PC-3 (cell line): ENCODE measurements at regions of chr14 and their contacts with region 1.

Region 1: DNA sequence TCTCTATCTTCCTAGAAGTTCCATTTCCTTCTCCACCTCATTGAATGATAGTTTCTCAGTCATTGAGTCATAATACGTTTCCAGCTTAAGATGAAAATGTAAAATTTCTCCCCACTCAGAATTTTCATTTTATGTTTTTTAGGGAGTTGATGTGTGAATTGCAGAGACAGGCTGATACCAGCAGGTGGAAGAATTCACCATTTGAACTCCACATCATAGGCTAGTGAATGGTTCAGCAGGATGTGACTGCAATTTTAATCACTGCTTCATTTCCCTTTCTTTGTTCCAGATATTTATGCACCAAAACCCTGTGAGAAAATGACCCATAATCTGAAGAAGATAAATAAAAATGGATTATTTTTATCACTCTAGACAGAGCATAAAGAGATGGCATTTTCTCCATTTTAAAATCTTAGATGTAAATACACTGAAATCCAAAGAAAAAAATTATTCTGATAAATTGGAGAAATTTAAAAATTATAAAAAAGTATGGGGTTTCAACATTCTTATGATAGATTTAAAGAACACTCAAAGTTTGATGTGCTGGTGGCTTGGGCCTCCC is 10.6 kb upstream of the PYGL start:
- DNase-seq: peak; percentile 82
- ATAC-seq: peak; percentile 69
- H3K4me3 ChIP-seq: peak overlapping the region; percentile 20; the same call in 1 of the 2 replicates
- H3K27ac ChIP-seq: peak overlapping the region; percentile 89
- H3K4me1 ChIP-seq: peaks cover 19% of the 10 kb centered on the region
- H3K27me3 ChIP-seq: no peaks in the 10 kb centered on the region
- CTCF ChIP-seq: peak; percentile 91

Region 2: GRCh38 chr14:50573858-50574257 is 381.0 kb before region 1 on chr14:
- CTCF ChIA-PET with region 1: no interaction called
- POLR2A ChIA-PET with region 1: no interaction called
- intact Hi-C with region 1: no loop called
- DNase-seq: peak; percentile 68
- ATAC-seq: peak; percentile 97
- H3K4me3 ChIP-seq: 0 out of 2 replicates have a peak overlapping the region, but pooled peaks have one; percentile 11
- H3K27ac ChIP-seq: no peak overlapping the region
- H3K4me1 ChIP-seq: peaks cover 11% of the 10 kb centered on the region
- H3K27me3 ChIP-seq: no peaks in the 10 kb centered on the region
- CTCF ChIP-seq: no peak

Region 3: GRCh38 chr14:50631408-50631821 is 323.5 kb before region 1 on chr14:
- CTCF ChIA-PET with region 1: no interaction called
- POLR2A ChIA-PET with region 1: no interaction called
- intact Hi-C with region 1: no loop called
- DNase-seq: no peak
- ATAC-seq: peak; percentile 64
- H3K4me3 ChIP-seq: no peak overlapping the region
- H3K27ac ChIP-seq: no peak overlapping the region
- H3K4me1 ChIP-seq: no peaks in the 10 kb centered on the region
- H3K27me3 ChIP-seq: no peaks in the 10 kb centered on the region
- CTCF ChIP-seq: no peak

Region 4: GRCh38 chr14:50943943-50944646 is 10.8 kb before region 1 on chr14 and contains the start of gene PYGL:
- CTCF ChIA-PET with region 1: interaction called, 12 read pairs
- POLR2A ChIA-PET with region 1: no interaction called
- intact Hi-C with region 1: no loop called
- DNase-seq: peak; percentile 88
- ATAC-seq: peak; percentile 76
- H3K4me3 ChIP-seq: peak within 1 kb of the TSS; percentile 97
- H3K27ac ChIP-seq: peak within 1 kb of the TSS; percentile 57
- H3K4me1 ChIP-seq: peaks cover 19% of the 10 kb centered on the region
- H3K27me3 ChIP-seq: no peaks in the 10 kb centered on the region
- CTCF ChIP-seq: no peak
- total RNA-seq, gene PYGL: 163 and 174 TPM in 2 replicates

Region 5: GRCh38 chr14:51014086-51014485 is 59.2 kb after region 1 on chr14:
- CTCF ChIA-PET with region 1: interaction called, 4 read pairs
- POLR2A ChIA-PET with region 1: no interaction called
- intact Hi-C with region 1: loop called (anchors 2 kb)
- DNase-seq: peak; percentile 89
- ATAC-seq: peak; percentile 92
- H3K4me3 ChIP-seq: peak overlapping the region; percentile 26; the same call in 1 of the 2 replicates
- H3K27ac ChIP-seq: peak overlapping the region; percentile 91
- H3K4me1 ChIP-seq: peaks cover 21% of the 10 kb centered on the region
- H3K27me3 ChIP-seq: no peaks in the 10 kb centered on the region
- CTCF ChIP-seq: no peak

Region 6: GRCh38 chr14:51094901-51095853 is 140.3 kb after region 1 on chr14 and contains the start of gene TRIM9:
- CTCF ChIA-PET with region 1: interaction called, 10 read pairs
- POLR2A ChIA-PET with region 1: interaction called, 3 read pairs
- intact Hi-C with region 1: loop called (anchors 2 kb)
- DNase-seq: peak; percentile 99
- ATAC-seq: peak; percentile 97
- H3K4me3 ChIP-seq: peak within 1 kb of the TSS; percentile 66
- H3K27ac ChIP-seq: peak within 1 kb of the TSS; percentile 45
- H3K4me1 ChIP-seq: peaks cover 12% of the 10 kb centered on the region; the same call in 1 of the 2 replicates
- H3K27me3 ChIP-seq: no peaks in the 10 kb centered on the region
- CTCF ChIP-seq: no peak
- total RNA-seq, gene TRIM9: 2.5 and 2.6 TPM in 2 replicates

Region 7: GRCh38 chr14:51182131-51182565 is 227.3 kb after region 1 on chr14:
- CTCF ChIA-PET with region 1: no interaction called
- POLR2A ChIA-PET with region 1: no interaction called
- intact Hi-C with region 1: loop called (anchors 1 kb)
- DNase-seq: peak; percentile 100
- ATAC-seq: peak; percentile 96
- H3K4me3 ChIP-seq: peak overlapping the region; percentile 33; the same call in 1 of the 2 replicates
- H3K27ac ChIP-seq: peak overlapping the region; percentile 89
- H3K4me1 ChIP-seq: peaks cover 28% of the 10 kb centered on the region
- H3K27me3 ChIP-seq: no peaks in the 10 kb centered on the region
- CTCF ChIP-seq: no peak